ENCODE measurements at regions of chr4 and their contacts with region 1.

Region 1: DNA sequence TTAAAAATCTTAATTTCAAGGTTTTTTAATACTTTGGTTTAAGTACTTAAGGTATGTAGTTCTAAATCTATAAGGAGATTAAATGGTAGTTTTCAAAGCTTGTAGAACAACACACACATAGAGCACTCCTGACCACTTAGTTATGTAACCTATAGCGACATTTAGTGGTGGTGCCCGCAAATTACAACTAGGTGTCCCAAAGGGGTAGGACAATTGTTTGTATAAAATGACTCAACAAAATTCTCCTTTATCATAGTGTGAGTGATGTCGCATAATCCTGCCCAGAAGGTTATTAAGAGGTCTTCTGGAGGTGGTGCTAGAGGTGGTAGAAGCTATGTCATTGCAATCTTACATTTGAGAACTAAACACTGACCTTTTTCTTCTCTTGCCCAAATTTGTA is 373.0 kb upstream of the RASGEF1B start:
- DNase-seq: peak; percentile 89
- H3K4me3 ChIP-seq: no peak overlapping the region
- H3K27ac ChIP-seq: no peak overlapping the region
- H3K4me1 ChIP-seq: no peaks in the 10 kb centered on the region
- H3K27me3 ChIP-seq: no peaks in the 10 kb centered on the region
- CTCF ChIP-seq: peak; percentile 74 to 81 (median 77)
- POLR2A ChIP-seq: no peak

Region 2: GRCh38 chr4:81466841-81467671 is 377.7 kb before region 1 on chr4:
- intact Hi-C with region 1: loop called (anchors 5 kb)
- DNase-seq: peak; percentile 89
- H3K4me3 ChIP-seq: no peak overlapping the region
- H3K27ac ChIP-seq: no peak overlapping the region
- H3K4me1 ChIP-seq: no peaks in the 10 kb centered on the region
- H3K27me3 ChIP-seq: no peaks in the 10 kb centered on the region
- CTCF ChIP-seq: peak; percentile 85 to 91 (median 88)
- POLR2A ChIP-seq: no peak

Measured in testis (tissue), 5 donors.